HEK293 (cell line): ENCODE measurements at regions of chr15 and their contacts with region 1.

Region 1: DNA sequence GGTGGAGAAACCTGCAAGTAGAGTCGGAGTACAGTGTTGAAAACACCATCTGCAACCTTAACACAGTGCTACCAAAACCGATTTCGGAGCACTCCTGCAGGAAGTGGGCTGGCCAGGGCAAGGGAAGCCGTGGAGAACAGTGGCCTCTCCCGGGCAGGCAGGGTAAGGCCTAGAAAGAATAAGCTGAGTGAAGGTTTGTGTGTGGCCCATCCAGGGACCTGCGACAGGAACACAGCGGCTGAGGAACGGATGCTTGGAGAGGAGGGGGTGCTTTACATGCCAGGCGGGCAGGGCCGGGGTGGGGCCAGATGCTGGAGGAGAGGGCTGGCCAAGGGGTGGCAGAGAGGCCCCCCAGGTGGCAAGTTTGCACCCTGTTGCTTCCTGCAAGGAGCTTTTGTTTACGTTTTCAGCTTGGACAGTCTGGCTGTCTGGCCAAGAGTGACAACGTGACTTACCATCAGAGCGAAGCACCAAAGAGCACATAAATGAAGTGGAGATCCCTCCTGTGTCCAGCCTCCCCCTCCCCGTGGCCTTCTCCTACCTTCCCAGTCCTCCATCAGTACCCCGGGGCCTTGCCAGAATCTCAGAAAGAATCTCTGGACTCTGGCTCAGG is 156.5 kb downstream of the PGPEP1L start:
- H3K4me3 ChIP-seq: no peak overlapping the region
- H3K27ac ChIP-seq: peak overlapping the region; percentile 0; the same call in 1 of the 2 replicates
- H3K4me1 ChIP-seq: peaks cover 37% of the 10 kb centered on the region
- CTCF ChIP-seq: peak; percentile 89

Region 2: DNA sequence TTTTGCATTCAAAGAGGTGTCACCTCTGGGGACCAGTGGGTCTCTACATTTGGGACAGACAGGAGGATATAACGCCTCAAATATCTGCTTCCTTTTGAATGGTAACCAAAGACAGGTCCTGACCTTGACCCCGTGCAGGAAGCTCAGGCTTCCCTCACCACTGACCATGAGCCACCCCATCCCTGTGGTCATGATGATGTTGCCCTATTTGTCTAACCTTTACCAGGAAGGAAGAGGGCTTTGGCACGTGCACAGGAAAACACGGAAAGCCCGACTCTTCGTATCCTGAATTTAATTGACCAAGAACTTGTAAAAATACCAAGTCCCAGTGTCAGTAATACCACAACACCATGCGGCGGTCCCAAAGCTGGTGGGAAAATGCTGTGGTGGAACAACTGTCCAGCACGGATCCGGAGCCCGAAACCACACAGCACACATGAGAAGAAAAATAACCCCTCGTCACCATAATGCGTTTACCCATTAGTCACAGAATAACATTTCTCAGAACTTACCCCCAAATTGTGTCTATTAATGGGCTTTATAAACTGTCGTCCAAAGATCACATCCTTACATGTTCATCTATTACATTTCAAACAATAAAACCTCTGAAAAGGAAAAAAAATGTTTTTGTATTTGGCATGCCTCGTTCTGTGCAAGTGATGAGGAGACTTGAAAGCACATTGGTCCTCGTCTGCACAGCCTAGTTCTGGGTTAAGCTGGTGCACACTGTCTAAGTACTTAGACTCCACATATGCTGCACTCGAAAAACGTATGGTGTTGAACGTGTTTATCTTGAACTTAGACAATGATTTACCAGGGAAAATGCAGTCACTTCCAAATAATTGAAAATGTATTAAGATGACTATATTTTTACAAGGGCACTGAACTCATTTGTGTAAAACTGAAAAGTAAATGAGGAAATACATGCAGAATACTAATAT is 321.6 kb before region 1 on chr15:
- CTCF ChIA-PET with region 1: no interaction called
- POLR2A ChIA-PET with region 1: no interaction called
- H3K4me3 ChIP-seq: no peak overlapping the region
- H3K27ac ChIP-seq: no peak overlapping the region
- H3K4me1 ChIP-seq: no peaks in the 10 kb centered on the region
- CTCF ChIP-seq: no peak

Region 3: DNA sequence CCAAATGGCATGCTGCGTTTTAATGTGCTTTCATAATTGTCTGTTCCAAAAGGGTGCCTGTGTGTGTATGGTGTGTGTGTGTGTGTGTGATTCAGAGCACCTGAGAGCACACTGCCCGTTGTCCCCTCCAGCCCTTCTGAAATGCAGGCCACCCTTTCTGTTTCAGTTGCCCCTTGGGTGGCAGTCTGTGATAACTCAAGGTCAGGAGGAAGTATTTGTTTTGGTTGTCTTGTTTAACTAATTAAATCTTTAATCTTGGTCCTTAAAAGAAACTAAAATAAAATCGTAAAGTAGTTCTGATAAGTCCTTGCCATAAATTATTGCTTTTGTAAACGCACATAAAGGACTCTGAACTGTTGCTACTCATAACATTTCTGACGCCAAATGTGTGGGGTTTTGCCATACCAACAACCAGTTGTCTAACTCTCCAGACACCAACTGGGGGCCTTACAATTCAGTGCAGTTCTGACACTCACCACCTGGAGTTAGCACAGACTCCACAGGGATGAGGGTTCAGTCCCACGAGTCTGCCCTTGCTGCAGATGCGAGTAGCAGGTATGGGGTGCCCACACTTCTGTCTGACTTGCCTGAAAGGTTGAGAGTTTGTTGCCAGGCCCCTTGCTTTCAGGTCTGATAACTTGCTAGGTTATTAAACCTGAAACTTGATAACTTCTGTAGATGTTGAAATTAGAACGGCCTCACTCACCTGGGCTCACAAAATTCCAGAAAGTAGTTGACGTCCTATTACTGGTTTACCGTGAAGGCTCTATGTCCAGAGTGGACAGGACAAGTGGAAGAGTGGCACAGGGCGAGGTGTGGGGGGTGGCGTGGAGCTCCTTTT is 45.4 kb before region 1 on chr15:
- CTCF ChIA-PET with region 1: interaction called, 10 read pairs
- POLR2A ChIA-PET with region 1: no interaction called
- H3K4me3 ChIP-seq: no peak overlapping the region
- H3K27ac ChIP-seq: peak overlapping the region; percentile 42; the same call in 1 of the 2 replicates
- H3K4me1 ChIP-seq: peaks cover 29% of the 10 kb centered on the region
- CTCF ChIP-seq: no peak

Region 4: DNA sequence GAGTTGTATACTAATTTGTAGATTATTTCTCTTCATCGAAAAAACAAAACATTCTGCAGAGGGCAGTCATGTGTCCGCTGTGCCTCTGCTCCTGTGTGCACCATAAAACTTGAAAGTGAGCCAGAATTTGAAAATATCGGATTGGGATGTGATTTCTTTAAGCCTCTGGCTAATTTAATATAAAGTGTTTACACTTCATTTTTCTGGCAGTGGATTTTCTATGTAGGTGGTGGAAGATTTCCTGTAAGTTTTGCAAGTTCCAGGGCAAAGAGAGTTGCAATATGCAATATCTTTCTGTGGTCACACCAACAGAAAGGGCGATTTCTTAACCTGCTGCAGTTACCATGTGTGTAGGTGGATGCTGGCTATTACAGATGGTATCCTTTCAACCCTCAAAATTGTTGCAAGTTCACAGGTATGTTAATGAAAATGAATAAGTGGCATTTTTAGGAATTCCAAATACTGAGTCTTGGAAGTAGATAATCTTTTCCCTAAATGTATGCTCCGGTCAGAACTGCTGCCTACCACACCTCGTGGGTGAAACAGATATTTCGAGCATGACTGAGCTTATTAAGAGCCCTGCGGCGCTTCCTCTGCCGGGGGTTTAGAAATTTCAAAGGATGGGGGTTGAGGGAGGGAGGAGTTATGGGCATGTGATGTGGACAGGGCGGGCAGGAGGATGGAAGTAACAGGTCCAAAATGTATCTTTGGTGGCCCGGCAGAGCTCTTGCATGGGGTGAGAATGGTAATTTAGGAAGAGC is 22.6 kb after region 1 on chr15:
- CTCF ChIA-PET with region 1: interaction called, 10 read pairs
- POLR2A ChIA-PET with region 1: interaction called, 5 read pairs
- H3K4me3 ChIP-seq: peak overlapping the region; percentile 1
- H3K27ac ChIP-seq: peak overlapping the region; percentile 18; the same call in 1 of the 2 replicates
- H3K4me1 ChIP-seq: peaks cover 32% of the 10 kb centered on the region
- CTCF ChIP-seq: no peak

Region 5: DNA sequence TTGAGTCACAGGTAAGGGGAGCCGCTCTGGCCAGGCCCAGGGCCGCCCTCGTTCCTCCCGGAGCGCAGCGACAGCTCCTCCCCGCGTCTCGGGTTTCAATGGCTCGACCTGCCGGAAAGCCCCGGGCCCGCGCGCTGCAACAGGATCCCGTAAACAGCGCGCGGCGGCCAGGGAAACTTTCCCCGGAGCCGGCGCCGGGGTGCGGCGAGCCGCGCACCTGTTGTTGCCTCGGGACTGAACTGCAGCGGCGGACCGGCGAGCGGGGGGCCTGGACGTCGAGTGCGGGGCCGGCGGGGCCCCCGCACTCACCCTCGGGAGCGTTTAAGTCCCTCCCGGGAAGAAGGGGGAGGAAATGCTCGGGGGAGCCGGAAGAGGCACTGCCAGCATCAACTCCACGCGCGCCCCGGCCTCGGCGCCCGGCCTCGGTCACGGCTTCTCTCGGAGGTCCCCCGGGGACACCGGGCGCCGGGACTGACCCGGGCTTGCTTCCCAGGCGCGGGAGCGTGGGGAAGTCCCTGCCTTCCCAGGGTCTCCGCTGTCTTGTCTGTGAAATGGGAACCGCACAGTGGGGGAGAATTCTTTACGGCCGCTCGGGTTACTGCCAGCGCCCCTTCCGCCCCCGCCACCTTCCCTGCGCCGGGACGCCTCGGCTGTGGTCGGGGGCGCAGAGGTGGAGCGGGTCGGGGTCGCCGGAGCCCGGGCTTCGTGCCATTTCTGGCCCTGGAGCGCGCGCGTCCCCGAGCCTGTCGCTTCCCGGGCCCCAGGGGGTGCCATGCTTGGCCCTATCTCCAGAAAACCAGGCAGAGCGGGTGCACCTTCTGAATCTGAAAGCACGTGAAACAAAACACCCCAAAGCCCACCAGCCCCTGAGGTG is 164.0 kb after region 1 on chr15:
- CTCF ChIA-PET with region 1: no interaction called
- POLR2A ChIA-PET with region 1: no interaction called
- H3K4me3 ChIP-seq: peak overlapping the region; percentile 51
- H3K27ac ChIP-seq: peak overlapping the region; percentile 90
- H3K4me1 ChIP-seq: peaks cover 2% of the 10 kb centered on the region
- CTCF ChIP-seq: peak; percentile 33; the same call in 1 of the 2 replicates

Region 6: DNA sequence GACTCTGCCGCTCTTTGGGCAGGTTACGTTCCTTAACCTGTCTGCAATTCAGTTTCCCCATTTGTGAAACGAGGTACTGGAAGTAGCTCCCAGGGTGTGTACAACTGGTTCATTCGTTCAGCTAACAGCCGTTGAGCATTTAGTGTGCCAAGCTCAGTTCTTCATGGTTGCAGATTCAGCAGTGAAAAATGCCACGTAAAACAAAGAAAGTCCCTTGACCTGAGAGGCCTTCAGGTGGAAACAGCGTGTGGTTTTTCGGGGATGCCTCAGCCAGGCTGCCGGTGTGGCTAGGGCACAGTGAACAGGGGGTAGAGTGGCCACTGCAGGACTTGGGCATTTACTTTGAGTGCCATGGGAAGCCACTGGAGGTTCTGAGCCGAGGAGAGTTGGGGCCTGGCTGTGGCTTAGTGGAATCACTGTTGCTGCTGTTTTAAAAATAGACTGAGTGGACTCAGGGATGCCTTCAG is 258.5 kb after region 1 on chr15:
- CTCF ChIA-PET with region 1: no interaction called
- POLR2A ChIA-PET with region 1: no interaction called
- H3K4me3 ChIP-seq: no peak overlapping the region
- H3K27ac ChIP-seq: no peak overlapping the region
- H3K4me1 ChIP-seq: no peaks in the 10 kb centered on the region; the same call in 1 of the 2 replicates
- CTCF ChIP-seq: no peak